ENCODE measurements at regions of chr2 and their contacts with region 1.

Region 1: GRCh38 chr2:290090-290722 is 2.3 kb upstream of the ALKAL2 start:
- DNase-seq: peak; percentile 74 to 83
- ATAC-seq: peak; percentile 81 to 94
- H3K4me3 ChIP-seq: peak overlapping the region; percentile 52
- H3K27ac ChIP-seq: no peak overlapping the region
- H3K4me1 ChIP-seq: peaks cover 16% of the 10 kb centered on the region
- CTCF ChIP-seq: peak; percentile 85
- EP300 ChIP-seq: no peak
- POLR2A ChIP-seq: no peak
- RAD21 ChIP-seq: peak; percentile 84 to 88

Region 2: DNA sequence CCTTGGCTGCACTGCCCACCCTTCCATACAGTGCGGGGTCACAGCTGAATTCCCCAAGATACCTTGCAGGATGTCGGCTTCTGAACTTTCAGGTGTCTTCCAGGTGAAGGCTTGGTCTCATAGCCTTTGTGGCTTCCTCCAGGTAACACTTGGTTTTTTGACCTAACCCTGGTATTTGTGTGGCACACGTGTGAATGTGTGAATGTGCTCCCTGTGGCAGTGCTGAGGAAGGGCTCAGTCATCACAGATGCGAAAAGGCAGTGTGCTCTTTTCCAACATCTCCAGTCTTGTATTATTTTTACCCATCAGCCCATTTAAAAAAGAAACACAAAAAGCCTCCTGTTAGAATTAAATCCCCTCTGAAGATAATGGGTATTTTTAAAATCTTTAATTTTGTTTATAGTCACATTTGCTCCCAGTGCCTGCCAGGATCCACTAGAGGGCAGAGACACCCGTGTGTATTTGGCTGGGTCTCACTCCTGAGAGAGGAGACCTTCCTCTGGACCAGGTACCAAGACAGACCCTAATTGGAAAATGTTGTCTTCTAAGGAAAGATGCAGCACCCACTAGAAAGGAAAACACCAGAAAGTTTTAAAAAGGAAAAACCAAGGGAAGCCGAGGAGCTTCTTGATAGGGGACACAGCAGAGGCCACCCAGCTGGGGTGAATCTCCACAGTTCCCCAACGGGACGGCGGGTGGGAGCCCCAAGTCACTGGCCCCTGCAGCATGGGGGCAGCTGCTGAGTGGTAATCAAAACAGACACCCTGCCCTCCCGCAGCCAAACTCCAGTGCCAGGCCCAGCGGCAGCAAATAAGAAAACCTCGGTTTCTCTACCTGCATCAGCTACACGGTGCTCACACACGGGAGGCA is 271.6 kb before region 1 on chr2:
- CTCF ChIA-PET with region 1: interaction called, 54 read pairs
- POLR2A ChIA-PET with region 1: no interaction called
- DNase-seq: no peak
- ATAC-seq: peak; percentile 45 to 82; a peak in 3 of 6 replicates
- H3K4me3 ChIP-seq: no peak overlapping the region
- H3K27ac ChIP-seq: no peak overlapping the region
- H3K4me1 ChIP-seq: no peaks in the 10 kb centered on the region
- CTCF ChIP-seq: peak; percentile 62
- EP300 ChIP-seq: no peak
- POLR2A ChIP-seq: no peak
- RAD21 ChIP-seq: peak; percentile 56 to 65; a peak in 4 of 5 replicates

Region 3: GRCh38 chr2:65121-65520 is 225.1 kb before region 1 on chr2:
- CTCF ChIA-PET with region 1: no interaction called
- POLR2A ChIA-PET with region 1: no interaction called
- DNase-seq: no peak
- ATAC-seq: no peak
- H3K4me3 ChIP-seq: no peak overlapping the region
- H3K27ac ChIP-seq: no peak overlapping the region
- H3K4me1 ChIP-seq: no peaks in the 10 kb centered on the region
- CTCF ChIP-seq: no peak
- EP300 ChIP-seq: no peak
- POLR2A ChIP-seq: no peak
- RAD21 ChIP-seq: no peak

Region 4: GRCh38 chr2:246489-247144 is 43.6 kb before region 1 on chr2:
- CTCF ChIA-PET with region 1: interaction called, 12 read pairs
- POLR2A ChIA-PET with region 1: no interaction called
- DNase-seq: peak in 1 of 2 experiments; percentile 71
- ATAC-seq: peak; percentile 78 to 85
- H3K4me3 ChIP-seq: no peak overlapping the region
- H3K27ac ChIP-seq: no peak overlapping the region
- H3K4me1 ChIP-seq: no peaks in the 10 kb centered on the region
- CTCF ChIP-seq: peak; percentile 71
- EP300 ChIP-seq: no peak
- POLR2A ChIP-seq: no peak
- RAD21 ChIP-seq: peak; percentile 37 to 44; a peak in 3 of 5 replicates

Region 5: DNA sequence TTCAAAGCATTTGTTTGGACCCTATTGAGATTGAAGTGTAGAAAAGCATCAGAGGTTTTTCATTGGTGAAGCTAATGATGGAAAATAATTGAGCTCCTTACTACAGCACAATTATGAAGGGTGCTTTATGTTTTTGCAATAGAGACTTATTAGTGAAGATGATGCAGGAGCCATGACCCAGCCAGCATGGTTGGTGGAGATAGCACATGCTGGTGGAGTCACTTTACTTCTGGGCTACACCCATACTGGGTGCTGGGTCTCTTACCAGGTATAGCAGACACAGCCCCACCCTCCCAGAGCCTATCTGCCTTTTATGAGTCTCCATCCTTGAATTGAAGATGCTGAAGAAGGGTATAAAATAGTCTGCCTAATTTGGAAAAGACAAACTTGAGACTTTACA is 21.9 kb before region 1 on chr2:
- CTCF ChIA-PET with region 1: interaction called, 12 read pairs
- POLR2A ChIA-PET with region 1: no interaction called
- DNase-seq: no peak
- ATAC-seq: no peak
- H3K4me3 ChIP-seq: no peak overlapping the region
- H3K27ac ChIP-seq: no peak overlapping the region
- H3K4me1 ChIP-seq: peaks cover 13% of the 10 kb centered on the region; the same call in 2 of the 3 replicates
- CTCF ChIP-seq: no peak
- EP300 ChIP-seq: no peak
- POLR2A ChIP-seq: no peak
- RAD21 ChIP-seq: no peak

Region 6: DNA sequence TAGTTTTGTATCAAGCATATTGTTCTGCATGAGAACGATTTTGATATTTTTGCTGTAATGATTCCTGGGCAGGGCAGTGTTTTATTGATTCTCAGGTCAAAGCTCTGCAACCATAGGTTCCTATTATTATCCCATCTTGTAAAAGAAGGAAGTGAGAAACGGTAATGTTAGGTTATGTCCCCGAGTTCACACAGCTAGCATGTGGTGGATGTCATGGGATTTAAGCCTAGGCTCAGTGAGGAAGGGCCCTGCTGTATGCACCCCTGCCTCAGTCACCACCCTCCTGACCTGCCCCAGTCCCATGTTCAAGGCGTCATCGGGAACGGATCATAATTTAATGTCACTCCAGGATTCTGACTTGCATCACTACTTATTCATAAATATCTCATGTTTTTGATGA is 14.7 kb before region 1 on chr2:
- CTCF ChIA-PET with region 1: interaction called, 14 read pairs
- POLR2A ChIA-PET with region 1: no interaction called
- DNase-seq: no peak
- ATAC-seq: no peak
- H3K4me3 ChIP-seq: no peak overlapping the region
- H3K27ac ChIP-seq: no peak overlapping the region
- H3K4me1 ChIP-seq: peaks cover 4% of the 10 kb centered on the region; the same call in 1 of the 3 replicates
- CTCF ChIP-seq: no peak
- EP300 ChIP-seq: no peak
- POLR2A ChIP-seq: no peak
- RAD21 ChIP-seq: no peak

Region 7: GRCh38 chr2:368386-368785 is 78.2 kb after region 1 on chr2:
- CTCF ChIA-PET with region 1: no interaction called
- POLR2A ChIA-PET with region 1: no interaction called
- DNase-seq: no peak
- ATAC-seq: no peak
- H3K4me3 ChIP-seq: no peak overlapping the region
- H3K27ac ChIP-seq: no peak overlapping the region
- H3K4me1 ChIP-seq: no peaks in the 10 kb centered on the region
- CTCF ChIP-seq: no peak
- EP300 ChIP-seq: no peak
- POLR2A ChIP-seq: no peak
- RAD21 ChIP-seq: no peak

Region 8: GRCh38 chr2:778731-779350 is 488.6 kb after region 1 on chr2:
- CTCF ChIA-PET with region 1: no interaction called
- POLR2A ChIA-PET with region 1: no interaction called
- DNase-seq: no peak
- ATAC-seq: no peak
- H3K4me3 ChIP-seq: no peak overlapping the region
- H3K27ac ChIP-seq: no peak overlapping the region
- H3K4me1 ChIP-seq: no peaks in the 10 kb centered on the region
- CTCF ChIP-seq: no peak
- EP300 ChIP-seq: no peak
- POLR2A ChIP-seq: no peak
- RAD21 ChIP-seq: no peak